ENCODE measurements at regions of chr19 and their contacts with region 1.

Region 1: DNA sequence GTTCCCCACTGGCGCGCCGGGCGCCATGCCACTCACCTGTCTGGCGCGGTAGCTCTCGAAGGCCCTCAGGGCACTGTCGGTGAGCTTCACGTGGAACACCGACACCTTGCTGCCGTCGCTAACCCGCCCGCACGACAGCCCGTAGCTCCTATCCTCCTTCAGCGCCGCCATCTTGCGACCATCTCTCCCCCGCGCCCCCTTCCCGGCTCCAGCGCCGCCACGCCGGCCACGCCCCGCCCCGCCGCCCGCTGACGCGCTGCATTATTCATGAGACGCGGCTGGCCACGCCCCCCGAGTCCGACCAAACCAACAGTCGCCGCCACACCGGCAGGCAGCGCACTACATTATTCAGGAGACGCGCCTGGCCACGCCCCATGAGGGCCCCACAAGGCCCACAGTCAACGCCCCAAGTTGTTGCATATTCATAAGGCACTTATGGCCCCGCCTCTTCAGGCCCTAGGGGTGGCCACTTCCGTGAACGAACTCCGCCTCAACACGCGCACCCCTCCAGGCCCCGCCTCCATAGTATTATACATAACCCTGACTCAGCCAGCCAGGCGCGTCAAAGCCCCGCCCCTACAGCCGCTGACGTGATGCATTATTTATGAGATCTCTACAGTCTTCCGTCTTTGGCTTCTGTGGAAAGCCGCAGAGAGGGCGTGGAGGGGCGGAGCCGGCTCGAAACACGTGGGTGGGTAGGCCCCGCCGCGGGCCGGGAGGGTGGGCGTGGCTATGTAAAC is at the start of gene ELL:
- H3K4me3 ChIP-seq: peak within 1 kb of the TSS; percentile 100
- H3K27ac ChIP-seq: peak within 1 kb of the TSS; percentile 81
- H3K4me1 ChIP-seq: no peaks in the 10 kb centered on the region
- CTCF ChIP-seq: peak; percentile 51

Region 2: GRCh38 chr19:18478569-18479311 is 43.3 kb before region 1 on chr19:
- CTCF ChIA-PET with region 1: interaction called, 3 read pairs
- POLR2A ChIA-PET with region 1: interaction called, 13 read pairs
- H3K4me3 ChIP-seq: no peak overlapping the region
- H3K27ac ChIP-seq: no peak overlapping the region
- H3K4me1 ChIP-seq: no peaks in the 10 kb centered on the region; the same call in 1 of the 2 replicates
- CTCF ChIP-seq: no peak

Region 3: GRCh38 chr19:18488838-18489626 is 33.0 kb before region 1 on chr19:
- CTCF ChIA-PET with region 1: interaction called, 14 read pairs
- POLR2A ChIA-PET with region 1: interaction called, 4 read pairs
- H3K4me3 ChIP-seq: no peak overlapping the region
- H3K27ac ChIP-seq: no peak overlapping the region
- H3K4me1 ChIP-seq: peaks cover 10% of the 10 kb centered on the region
- CTCF ChIP-seq: peak; percentile 47; the same call in 1 of the 2 replicates

Region 4: DNA sequence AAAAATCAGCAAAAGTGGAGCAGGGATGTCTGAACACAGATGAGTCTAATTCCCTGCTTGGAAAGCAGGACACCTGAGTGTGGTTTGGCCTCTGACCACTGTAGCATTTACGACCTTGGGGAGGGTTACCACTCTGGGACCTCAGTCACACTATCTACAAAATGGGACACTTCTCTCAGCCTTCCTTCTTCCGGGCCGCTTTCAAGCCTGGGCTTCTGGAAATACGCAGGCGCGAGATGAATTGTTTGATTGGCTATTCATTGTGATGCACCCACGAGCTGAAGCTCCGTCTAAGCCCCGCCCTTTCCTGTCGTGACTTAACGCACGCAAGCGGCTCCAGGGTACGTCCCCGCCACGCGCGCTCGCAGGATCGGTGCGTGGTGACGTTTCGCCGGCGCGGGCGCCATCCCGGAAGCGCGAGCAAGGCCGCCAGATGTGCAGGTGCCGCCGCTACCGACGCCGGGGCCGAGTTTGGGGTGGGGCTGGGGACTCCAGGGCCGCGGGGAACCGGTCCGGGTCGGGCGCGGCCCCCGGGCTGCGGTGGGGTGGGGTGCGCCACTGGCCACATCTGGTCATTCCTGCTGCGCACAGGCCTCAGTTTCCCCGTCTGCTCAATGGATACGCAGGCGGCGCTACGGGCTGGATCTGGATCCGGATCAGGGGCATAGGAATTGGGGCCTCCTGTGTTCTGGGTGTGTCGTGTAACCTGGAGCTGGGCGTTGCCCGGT is 35.6 kb after region 1 on chr19 and contains the start of gene KXD1:
- CTCF ChIA-PET with region 1: interaction called, 4 read pairs
- POLR2A ChIA-PET with region 1: interaction called, 15 read pairs
- H3K4me3 ChIP-seq: peak within 1 kb of the TSS; percentile 81
- H3K27ac ChIP-seq: peak within 1 kb of the TSS; percentile 51; the same call in 1 of the 2 replicates
- H3K4me1 ChIP-seq: no peaks in the 10 kb centered on the region
- CTCF ChIP-seq: no peak

Region 5: GRCh38 chr19:18571564-18572300 is 49.7 kb after region 1 on chr19 and contains the start of gene UBA52:
- CTCF ChIA-PET with region 1: interaction called, 3 read pairs
- POLR2A ChIA-PET with region 1: interaction called, 11 read pairs
- H3K4me3 ChIP-seq: peak within 1 kb of the TSS; percentile 99
- H3K27ac ChIP-seq: peak within 1 kb of the TSS; percentile 87
- H3K4me1 ChIP-seq: peaks cover 3% of the 10 kb centered on the region; the same call in 1 of the 2 replicates
- CTCF ChIP-seq: no peak